A673 (cell line): ENCODE measurements at regions of chr1 and their contacts with region 1.

Region 1: DNA sequence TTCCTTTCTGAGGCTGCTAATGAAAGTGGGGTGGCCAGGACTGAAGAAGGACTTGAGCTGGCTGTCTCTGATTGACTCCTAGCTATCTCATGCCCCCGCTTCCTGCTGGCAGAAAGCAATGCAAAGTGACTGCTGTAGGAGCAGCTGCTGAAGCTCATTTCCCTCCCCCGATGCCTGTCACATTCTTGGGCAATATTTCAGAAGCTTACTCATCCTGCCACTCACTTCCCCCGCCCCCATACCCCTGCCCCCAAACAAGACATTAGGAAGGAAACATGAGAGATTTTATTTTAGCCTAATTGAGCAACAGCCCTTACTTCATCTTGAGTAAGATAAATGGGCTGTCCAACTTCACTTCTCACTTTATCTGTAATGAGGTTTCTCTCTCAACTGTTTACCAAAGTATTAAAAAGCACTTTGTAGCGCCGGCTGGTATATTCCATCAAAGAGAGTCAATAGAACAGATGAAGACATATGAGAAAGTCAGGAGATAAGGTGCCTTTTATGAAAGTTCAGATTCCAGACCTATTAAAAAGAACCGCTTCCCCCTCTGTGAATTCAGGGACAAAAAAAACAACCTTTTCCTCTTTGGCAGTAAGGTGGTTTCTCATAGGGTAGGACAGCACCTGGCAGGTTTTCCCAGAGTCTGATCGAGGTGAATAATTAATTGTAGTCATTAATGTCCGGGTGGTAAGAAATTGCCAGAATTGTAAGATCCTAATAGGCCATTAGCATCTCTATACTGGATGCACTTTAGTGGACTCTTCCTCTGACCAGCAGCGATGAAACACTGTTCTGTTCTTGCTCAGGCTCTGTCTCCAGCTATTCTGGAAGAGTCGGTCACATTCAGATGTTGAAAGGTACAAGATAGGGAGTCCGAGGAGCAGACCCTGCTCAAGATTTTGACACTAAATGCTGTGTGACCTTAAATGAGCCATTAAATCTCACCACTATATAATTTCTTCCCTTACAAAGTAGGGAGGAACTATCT is 70.2 kb downstream of the SH3GLB1 start:
- DNase-seq: peak; percentile 97
- H3K4me3 ChIP-seq: no peak overlapping the region
- H3K27ac ChIP-seq: peak overlapping the region; percentile 88
- H3K4me1 ChIP-seq: peaks cover 30% of the 10 kb centered on the region
- H3K27me3 ChIP-seq: no peaks in the 10 kb centered on the region
- CTCF ChIP-seq: no peak

Region 2: GRCh38 chr1:86487131-86487810 is 287.3 kb before region 1 on chr1:
- CTCF ChIA-PET with region 1: no interaction called
- POLR2A ChIA-PET with region 1: no interaction called
- intact Hi-C with region 1: no loop called
- DNase-seq: peak; percentile 87
- H3K4me3 ChIP-seq: no peak overlapping the region
- H3K27ac ChIP-seq: no peak overlapping the region
- H3K4me1 ChIP-seq: peaks cover 8% of the 10 kb centered on the region
- H3K27me3 ChIP-seq: no peaks in the 10 kb centered on the region
- CTCF ChIP-seq: no peak

Region 3: DNA sequence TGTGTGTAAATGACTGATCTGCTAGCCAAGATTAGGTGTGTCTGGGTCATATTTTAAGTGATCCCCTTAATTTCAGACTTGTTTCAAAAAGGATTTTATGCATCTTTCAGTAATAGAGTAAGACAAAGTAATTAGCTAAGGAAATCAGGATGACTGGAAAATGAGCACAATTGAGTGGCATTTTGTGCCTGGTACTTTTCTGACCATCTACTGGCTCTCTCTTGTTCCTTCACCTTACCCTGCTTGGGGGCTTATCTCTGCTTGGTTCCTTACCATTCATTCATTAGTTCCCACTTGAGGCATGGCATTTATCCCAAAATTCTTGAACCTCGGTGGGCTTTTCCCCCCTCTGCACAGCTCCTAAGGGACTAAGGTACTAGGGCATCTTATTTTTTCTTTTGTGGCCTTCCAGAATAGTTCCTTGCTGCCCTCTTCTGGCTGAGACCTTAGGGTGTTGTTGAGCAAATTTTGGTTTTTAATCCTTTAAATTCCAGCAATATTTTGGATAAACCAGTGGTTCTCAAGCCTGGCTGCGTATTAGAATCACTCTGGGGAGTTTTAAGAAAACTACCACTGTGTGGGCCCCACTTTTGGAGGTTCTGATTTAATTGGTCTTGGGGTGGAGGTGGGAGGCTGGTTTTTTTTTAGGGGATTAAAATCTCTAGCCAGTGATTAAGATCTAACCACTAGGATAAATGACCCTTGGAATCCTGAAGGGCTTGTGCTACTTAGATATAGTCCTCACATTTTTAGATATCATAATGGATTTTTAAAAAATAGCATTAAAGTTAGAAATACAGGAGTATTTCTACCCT is 190.6 kb after region 1 on chr1:
- CTCF ChIA-PET with region 1: no interaction called
- POLR2A ChIA-PET with region 1: no interaction called
- intact Hi-C with region 1: loop called (anchors 5 kb)
- DNase-seq: peak; percentile 68
- H3K4me3 ChIP-seq: no peak overlapping the region
- H3K27ac ChIP-seq: no peak overlapping the region
- H3K4me1 ChIP-seq: no peaks in the 10 kb centered on the region
- H3K27me3 ChIP-seq: no peaks in the 10 kb centered on the region
- CTCF ChIP-seq: peak; percentile 79